Breast epithelium (tissue), 4 donors: ENCODE measurements at regions of chr12 and their contacts with region 1.

Region 1: DNA sequence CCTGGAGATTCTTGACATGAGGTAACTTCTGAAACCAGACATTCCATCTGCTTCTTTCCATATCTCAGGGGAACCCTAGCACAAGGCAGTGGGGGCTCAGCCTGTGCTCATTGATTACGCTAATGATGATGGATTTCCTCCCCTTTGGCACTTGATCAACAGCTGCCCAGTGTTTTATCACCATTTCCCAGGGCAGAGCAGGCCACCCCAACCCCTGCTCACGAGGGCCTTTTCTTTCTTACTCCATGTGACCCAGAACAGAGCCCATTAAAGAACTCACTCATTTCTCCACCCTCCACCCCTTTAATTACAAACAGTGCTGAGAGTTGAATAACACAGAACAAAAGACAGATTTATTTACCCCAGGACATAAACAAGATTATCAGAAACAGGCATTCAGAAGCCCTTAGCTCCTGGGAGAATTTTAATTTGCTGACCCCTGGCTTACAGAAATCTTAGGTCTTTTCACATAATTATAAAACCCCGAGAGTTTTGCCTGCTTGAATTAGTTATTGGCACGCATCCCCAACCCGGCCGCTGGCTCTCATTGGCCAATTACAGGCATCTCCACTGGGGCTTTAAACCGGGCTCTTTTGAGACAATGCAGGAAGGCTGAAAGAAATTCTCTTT is 32.0 kb upstream of the CCDC60 start:
- DNase-seq: no peak
- H3K4me3 ChIP-seq: no peak overlapping the region
- H3K27ac ChIP-seq: no peak overlapping the region
- H3K4me1 ChIP-seq: no peaks in the 10 kb centered on the region
- H3K27me3 ChIP-seq: no peaks in the 10 kb centered on the region
- CTCF ChIP-seq: no peak
- POLR2A ChIP-seq: no peak

Region 2: DNA sequence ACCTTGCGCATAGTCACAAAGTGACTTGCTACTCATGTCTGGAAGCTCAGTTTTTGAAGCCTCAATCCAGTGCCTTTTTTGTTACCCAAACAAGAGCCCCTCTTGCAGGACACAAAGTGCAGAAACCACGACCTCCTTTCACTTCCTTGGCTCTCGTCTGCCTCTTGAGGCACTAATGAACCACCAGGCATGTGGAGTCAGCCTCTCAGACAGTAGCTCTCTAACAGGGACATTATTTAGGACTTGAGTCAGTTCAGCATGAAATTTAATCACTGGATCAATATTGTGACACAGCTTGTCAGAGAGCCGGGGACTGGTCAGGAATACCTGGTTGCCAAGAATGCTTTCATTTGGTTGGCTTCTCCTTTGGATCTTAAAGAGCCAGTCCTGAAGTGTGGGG is 77.1 kb before region 1 on chr12:
- intact Hi-C with region 1: loop called (anchors 2 kb)
- DNase-seq: no peak
- H3K4me3 ChIP-seq: no peak overlapping the region
- H3K27ac ChIP-seq: no peak overlapping the region
- H3K4me1 ChIP-seq: no peaks in the 10 kb centered on the region
- H3K27me3 ChIP-seq: no peaks in the 10 kb centered on the region
- CTCF ChIP-seq: no peak
- POLR2A ChIP-seq: no peak

Region 3: GRCh38 chr12:119274636-119275065 is 27.9 kb before region 1 on chr12:
- intact Hi-C with region 1: no loop called
- DNase-seq: no peak
- H3K4me3 ChIP-seq: no peak overlapping the region
- H3K27ac ChIP-seq: no peak overlapping the region
- H3K4me1 ChIP-seq: no peaks in the 10 kb centered on the region
- H3K27me3 ChIP-seq: peaks cover 0 to 7% of the 10 kb centered on the region in 2 donors
- CTCF ChIP-seq: no peak
- POLR2A ChIP-seq: no peak